ENCODE measurements at regions of chr10 and their contacts with region 1.

Region 1: DNA sequence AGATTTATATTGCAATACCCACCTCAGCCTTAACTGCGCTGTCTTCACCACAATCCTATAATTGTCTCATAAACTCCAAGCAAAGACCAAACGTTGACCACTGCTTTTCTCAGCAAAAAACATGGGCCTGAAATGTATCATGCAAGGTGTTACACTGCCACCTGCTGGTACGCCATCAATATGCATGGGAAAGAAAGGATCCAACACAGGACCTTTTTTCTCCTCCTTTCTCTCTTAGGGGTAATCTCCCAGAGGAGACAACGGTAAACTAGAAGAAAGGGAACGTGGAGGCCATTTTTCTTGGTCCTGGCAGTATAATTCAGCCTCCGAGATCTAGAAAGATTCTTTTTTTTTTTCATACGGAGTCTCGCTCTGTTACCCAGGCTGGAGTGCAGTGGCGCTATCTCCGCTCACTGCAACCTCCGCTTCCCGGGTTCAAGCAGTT is 79.1 kb upstream of the MPP7 start:
- DNase-seq: peak; percentile 59
- CTCF ChIP-seq: peak; percentile 85

Region 2: GRCh38 chr10:28250782-28251181 is 131.1 kb before region 1 on chr10:
- CTCF ChIA-PET with region 1: interaction called, 64 read pairs
- POLR2A ChIA-PET with region 1: no interaction called
- DNase-seq: no peak
- CTCF ChIP-seq: peak; percentile 40

Region 3: GRCh38 chr10:28302638-28303488 is 79.1 kb before region 1 on chr10 and contains the start of gene MPP7:
- CTCF ChIA-PET with region 1: interaction called, 15 read pairs
- POLR2A ChIA-PET with region 1: no interaction called
- DNase-seq: peak; percentile 95
- CTCF ChIP-seq: peak; percentile 16

Region 4: DNA sequence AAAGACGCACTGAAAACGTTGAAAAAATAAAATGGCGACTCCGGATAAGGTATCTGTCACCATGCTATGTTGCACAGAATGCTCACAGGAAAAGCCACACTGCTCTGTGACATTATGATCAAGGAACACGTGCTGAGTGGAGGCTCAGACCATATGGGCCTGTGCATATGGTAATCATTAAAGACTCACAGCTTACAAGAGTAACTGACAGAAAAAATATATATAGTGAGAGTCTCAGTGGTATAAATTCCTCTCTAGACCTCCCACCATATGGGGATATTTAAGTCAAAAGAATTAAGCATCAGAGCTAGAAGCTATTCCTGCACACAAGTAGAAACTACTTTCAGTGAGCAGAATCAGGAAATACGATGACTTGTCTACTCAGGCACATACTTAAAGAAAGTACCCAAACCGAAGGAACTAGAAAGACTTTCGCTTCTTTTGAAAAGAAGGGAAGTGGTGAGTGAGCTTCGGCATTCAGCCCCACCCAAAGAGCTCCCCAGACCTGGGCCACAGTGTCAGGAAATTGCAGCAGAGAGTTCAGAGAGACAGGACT is 13.9 kb before region 1 on chr10:
- CTCF ChIA-PET with region 1: interaction called, 33 read pairs
- POLR2A ChIA-PET with region 1: no interaction called
- DNase-seq: peak; percentile 60
- CTCF ChIP-seq: no peak

Region 5: DNA sequence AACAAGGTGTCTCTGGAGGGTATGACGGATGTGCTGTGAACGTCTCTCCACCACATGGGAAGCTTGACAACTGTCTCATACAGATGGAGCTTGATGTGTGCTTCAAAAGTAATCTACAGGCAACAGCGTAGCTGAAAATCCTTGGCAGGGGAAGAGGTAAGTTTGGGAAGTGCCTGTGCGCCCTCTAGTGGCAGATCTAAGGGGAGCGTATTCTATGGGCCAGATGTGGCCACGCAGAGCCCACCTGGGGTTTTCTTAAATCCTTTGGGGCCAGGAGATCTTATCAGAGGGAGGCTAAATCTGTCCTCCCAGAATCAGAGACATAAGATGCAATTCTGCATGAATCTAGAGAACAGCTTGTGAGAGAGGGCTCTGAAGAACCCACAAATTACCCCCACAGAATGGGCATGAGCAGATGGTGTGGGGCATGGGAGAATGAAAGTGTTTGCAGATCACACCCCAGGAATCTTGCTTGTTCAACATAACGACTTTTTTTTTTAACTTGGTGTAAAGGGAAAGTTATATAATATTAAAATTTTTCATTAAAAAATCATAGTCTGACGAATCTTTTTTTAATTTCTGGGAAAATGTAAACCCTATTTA is 12.1 kb after region 1 on chr10:
- CTCF ChIA-PET with region 1: interaction called, 54 read pairs
- POLR2A ChIA-PET with region 1: no interaction called
- DNase-seq: peak; percentile 49
- CTCF ChIP-seq: peak; percentile 85

Measured in GM10248 (cell line).